Naive thymus-derived CD4-positive, alpha-beta T cell (primary cell): ENCODE measurements at regions of chr16 and their contacts with region 1.

Region 1: DNA sequence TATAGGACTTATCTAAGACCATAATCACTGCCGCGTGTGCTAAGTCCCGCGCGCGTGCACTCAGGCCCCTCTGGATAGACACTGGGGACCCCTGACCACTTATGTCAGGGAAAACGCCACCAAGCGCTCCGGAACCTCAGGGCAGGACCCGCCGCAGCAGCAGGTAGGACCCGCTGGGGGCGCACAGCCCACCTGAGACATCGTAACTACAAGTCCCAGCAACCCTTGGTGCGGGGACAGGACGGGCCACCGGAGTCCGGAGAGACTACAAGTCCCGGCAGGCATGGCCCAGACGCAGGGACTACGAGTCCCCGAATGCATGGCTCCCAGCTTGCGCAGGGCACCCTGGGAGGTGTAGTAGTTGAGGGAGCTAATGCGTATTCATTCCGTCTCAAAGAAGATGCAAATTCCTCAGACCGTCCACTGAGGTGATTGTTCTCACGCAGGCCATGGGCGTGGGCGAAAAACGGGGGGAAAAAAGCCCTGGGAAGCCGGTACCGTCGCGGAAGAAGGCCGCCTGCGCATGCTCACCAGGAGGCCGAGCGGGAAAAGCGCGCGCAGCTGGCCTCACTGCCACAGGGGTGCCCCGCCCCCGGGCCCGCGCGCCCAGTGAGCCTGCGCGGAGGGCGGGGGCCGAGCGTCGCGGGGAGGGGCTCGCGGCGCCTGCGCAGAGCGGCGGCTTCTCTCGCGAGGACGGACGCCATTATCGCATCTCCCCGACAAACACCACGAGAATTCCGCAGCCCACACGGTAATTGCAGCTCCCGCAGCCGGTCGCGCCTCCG is at the start of gene BANP:
- DNase-seq: peak; percentile 96 to 99 (median 99)
- ATAC-seq: peak; percentile 93
- H3K4me3 ChIP-seq: peak within 1 kb of the TSS; percentile 83
- H3K4me3 Mint-ChIP-seq: peak within 1 kb of the TSS; percentile 92 to 100 (median 99)
- H3K27ac ChIP-seq: peak within 1 kb of the TSS; percentile 90
- H3K27ac Mint-ChIP-seq: peak within 1 kb of the TSS; percentile 97 to 100 (median 99)
- H3K4me1 ChIP-seq: peaks cover 15 to 33% of the 10 kb centered on the region in 2 donors
- H3K4me1 Mint-ChIP-seq: peaks cover 27 to 66% (median 43%) of the 10 kb centered on the region in 7 donors
- H3K27me3 ChIP-seq: no peaks in the 10 kb centered on the region
- H3K27me3 Mint-ChIP-seq: peaks cover 0 to 8% (median 2%) of the 10 kb centered on the region in 5 donors
- total RNA-seq, gene BANP: 43.6 to 81.2 (median 68.5) TPM

Region 2: GRCh38 chr16:87387942-87388817 is 562.8 kb before region 1 on chr16:
- CTCF ChIA-PET with region 1: no interaction called
- POLR2A ChIA-PET with region 1: interaction called, 4 read pairs
- intact Hi-C with region 1: loop called (anchors 1 kb)
- DNase-seq: peak; percentile 46 to 95 (median 88)
- ATAC-seq: peak; percentile 75
- H3K4me3 ChIP-seq: peak overlapping the region; percentile 27
- H3K4me3 Mint-ChIP-seq: peak overlapping the region; percentile 27 to 78 (median 68)
- H3K27ac ChIP-seq: peak overlapping the region; percentile 86
- H3K27ac Mint-ChIP-seq: peak overlapping the region; percentile 87 to 99 (median 96)
- H3K4me1 ChIP-seq: peaks cover 17 to 29% of the 10 kb centered on the region in 2 donors
- H3K4me1 Mint-ChIP-seq: peaks cover 15 to 55% (median 44%) of the 10 kb centered on the region in 7 donors
- H3K27me3 ChIP-seq: no peaks in the 10 kb centered on the region
- H3K27me3 Mint-ChIP-seq: peaks cover 0 to 2% (median 0%) of the 10 kb centered on the region in 5 donors

Region 3: GRCh38 chr16:87648236-87648635 is 302.7 kb before region 1 on chr16:
- CTCF ChIA-PET with region 1: no interaction called
- POLR2A ChIA-PET with region 1: no interaction called
- intact Hi-C with region 1: no loop called
- DNase-seq: no peak
- ATAC-seq: no peak
- H3K4me3 ChIP-seq: no peak overlapping the region
- H3K4me3 Mint-ChIP-seq: no peak overlapping the region
- H3K27ac ChIP-seq: no peak overlapping the region
- H3K27ac Mint-ChIP-seq: no peak overlapping the region
- H3K4me1 ChIP-seq: no peaks in the 10 kb centered on the region
- H3K4me1 Mint-ChIP-seq: peaks cover 0 to 3% (median 0%) of the 10 kb centered on the region in 7 donors
- H3K27me3 ChIP-seq: no peaks in the 10 kb centered on the region
- H3K27me3 Mint-ChIP-seq: peaks cover 0 to 15% (median 4%) of the 10 kb centered on the region in 5 donors

Region 4: DNA sequence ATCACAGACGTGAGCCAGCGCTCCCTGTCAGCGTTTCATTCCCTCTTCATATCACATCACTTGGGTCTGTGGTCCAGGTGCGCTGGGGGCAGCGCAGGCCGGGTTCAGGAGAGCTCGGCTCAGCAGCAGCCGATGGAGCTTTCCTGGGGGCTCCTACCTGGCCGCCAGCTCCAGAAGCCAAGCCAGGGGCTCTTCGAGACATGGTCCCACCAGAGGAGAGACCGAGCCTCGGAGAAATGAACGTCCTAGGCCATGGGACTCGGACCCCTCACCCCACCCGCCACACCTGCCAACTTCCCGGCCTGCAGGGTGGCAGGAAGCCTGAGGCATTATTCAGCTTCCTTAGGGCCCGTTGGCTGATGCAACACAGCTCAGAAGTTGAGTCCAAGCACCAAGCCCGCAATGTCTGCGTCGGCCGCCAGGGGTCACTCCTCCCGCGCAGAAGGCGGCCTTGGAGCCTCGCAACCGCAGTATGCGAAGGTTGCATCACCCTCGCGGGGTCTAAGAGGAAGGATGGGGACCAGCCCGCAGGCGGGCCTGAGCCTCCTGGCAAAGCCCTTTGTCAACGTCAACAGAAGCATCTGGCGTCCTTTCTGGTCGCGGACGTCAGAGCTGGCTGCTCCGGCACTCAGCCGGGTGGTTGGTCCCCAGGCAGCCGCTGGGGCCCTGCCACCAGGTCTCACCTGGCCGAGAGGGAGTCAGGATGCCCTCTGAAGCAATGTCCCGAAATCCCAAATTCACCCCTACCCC is 172.0 kb before region 1 on chr16:
- CTCF ChIA-PET with region 1: no interaction called
- POLR2A ChIA-PET with region 1: interaction called, 3 read pairs
- intact Hi-C with region 1: loop called (anchors 1 kb)
- DNase-seq: peak; percentile 83 to 96 (median 88)
- ATAC-seq: peak; percentile 94
- H3K4me3 ChIP-seq: no peak overlapping the region
- H3K4me3 Mint-ChIP-seq: peak overlapping the region in 9 of 10 donors; percentile 54 to 84 (median 63)
- H3K27ac ChIP-seq: no peak overlapping the region
- H3K27ac Mint-ChIP-seq: peak overlapping the region; percentile 51 to 96 (median 89)
- H3K4me1 ChIP-seq: peaks cover 17 to 33% of the 10 kb centered on the region in 2 donors
- H3K4me1 Mint-ChIP-seq: peaks cover 12 to 62% (median 38%) of the 10 kb centered on the region in 7 donors
- H3K27me3 ChIP-seq: no peaks in the 10 kb centered on the region
- H3K27me3 Mint-ChIP-seq: no peaks in the 10 kb centered on the region

Region 5: DNA sequence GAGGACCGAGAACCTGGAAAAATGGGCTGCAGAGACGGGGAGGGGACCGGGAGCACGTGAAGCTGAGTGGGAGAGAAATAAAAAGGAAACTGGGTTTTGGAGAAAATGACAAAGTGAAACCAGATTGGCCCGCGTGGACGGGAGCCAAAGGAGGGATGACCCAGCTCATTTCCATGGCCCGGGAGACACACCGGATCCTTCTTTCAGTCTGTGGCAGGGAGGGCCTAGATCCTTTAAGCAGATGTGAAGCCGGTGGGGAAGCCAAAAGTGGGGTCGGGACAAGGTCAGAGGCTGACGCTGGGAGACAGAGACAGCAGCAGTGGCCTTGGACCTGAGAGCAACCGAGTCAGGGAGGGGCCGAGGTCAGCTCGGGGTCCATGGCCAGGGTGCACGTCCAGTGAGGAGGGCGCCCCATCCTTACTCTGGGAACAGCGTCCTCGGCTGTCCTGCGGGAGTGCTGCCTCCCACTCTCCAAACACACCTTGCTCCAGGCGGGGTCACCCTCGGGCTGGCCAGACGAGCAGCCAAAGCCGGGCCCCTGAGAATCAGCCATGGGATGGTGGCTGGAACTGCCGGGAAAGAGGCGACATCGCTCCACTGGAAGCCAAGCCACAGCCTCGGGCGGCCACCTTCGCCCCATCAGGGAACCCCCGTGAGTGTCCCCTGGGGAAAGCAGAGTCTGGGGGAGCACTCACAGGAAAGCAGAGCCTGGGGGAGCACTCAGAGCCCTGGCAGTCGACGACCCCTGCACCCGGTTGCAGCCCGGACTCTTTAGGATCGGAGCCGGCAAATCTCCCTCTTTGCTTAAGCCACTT is 31.9 kb before region 1 on chr16:
- CTCF ChIA-PET with region 1: no interaction called
- POLR2A ChIA-PET with region 1: no interaction called
- intact Hi-C with region 1: no loop called
- DNase-seq: no peak
- ATAC-seq: no peak
- H3K4me3 ChIP-seq: no peak overlapping the region
- H3K4me3 Mint-ChIP-seq: no peak overlapping the region
- H3K27ac ChIP-seq: no peak overlapping the region
- H3K27ac Mint-ChIP-seq: no peak overlapping the region
- H3K4me1 ChIP-seq: no peaks in the 10 kb centered on the region
- H3K4me1 Mint-ChIP-seq: peaks cover 0 to 6% (median 0%) of the 10 kb centered on the region in 7 donors
- H3K27me3 ChIP-seq: no peaks in the 10 kb centered on the region
- H3K27me3 Mint-ChIP-seq: peaks cover 0 to 5% (median 4%) of the 10 kb centered on the region in 5 donors

Region 6: DNA sequence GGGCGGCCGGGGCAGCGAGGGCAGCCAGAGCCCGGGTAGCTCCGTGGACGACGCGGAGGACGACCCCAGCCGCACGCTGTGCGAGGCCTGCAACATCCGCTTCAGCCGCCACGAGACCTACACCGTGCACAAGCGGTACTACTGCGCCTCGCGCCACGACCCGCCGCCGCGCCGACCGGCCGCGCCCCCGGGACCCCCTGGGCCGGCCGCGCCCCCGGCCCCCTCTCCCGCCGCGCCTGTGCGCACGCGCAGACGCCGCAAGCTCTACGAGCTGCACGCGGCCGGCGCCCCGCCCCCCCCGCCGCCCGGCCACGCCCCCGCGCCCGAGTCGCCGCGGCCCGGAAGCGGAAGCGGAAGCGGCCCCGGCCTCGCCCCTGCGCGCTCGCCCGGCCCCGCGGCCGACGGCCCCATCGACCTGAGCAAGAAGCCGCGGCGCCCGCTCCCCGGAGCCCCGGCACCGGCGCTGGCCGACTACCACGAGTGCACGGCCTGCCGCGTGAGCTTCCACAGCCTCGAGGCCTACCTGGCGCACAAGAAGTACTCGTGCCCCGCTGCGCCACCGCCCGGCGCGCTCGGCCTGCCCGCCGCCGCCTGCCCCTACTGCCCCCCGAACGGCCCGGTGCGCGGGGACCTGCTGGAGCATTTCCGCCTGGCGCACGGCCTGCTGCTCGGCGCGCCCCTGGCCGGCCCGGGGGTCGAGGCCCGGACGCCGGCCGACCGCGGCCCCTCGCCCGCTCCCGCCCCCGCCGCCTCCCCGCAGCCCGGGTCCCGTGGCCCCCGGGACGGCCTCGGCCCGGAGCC is 583.2 kb after region 1 on chr16:
- CTCF ChIA-PET with region 1: no interaction called
- POLR2A ChIA-PET with region 1: no interaction called
- intact Hi-C with region 1: loop called (anchors 10 kb)
- DNase-seq: peak; percentile 45 to 87 (median 77)
- ATAC-seq: peak; percentile 89
- H3K4me3 ChIP-seq: peak overlapping the region; percentile 30
- H3K4me3 Mint-ChIP-seq: peak overlapping the region in 7 of 10 donors; percentile 23 to 87 (median 55)
- H3K27ac ChIP-seq: peak overlapping the region; percentile 80
- H3K27ac Mint-ChIP-seq: peak overlapping the region in 3 of 9 donors; percentile 53 to 79 (median 72)
- H3K4me1 ChIP-seq: peaks cover 0 to 9% of the 10 kb centered on the region in 2 donors
- H3K4me1 Mint-ChIP-seq: peaks cover 9 to 16% (median 13%) of the 10 kb centered on the region in 7 donors
- H3K27me3 ChIP-seq: no peaks in the 10 kb centered on the region
- H3K27me3 Mint-ChIP-seq: peaks cover 0 to 8% (median 0%) of the 10 kb centered on the region in 5 donors

Region 7: GRCh38 chr16:88706288-88706964 is 755.5 kb after region 1 on chr16 and contains the starts of genes CTU2 and RNF166:
- CTCF ChIA-PET with region 1: no interaction called
- POLR2A ChIA-PET with region 1: no interaction called
- intact Hi-C with region 1: loop called (anchors 5 to 10 kb)
- DNase-seq: peak; percentile 86 to 98 (median 92)
- ATAC-seq: peak; percentile 84
- H3K4me3 ChIP-seq: peak within 1 kb of the TSS; percentile 79
- H3K4me3 Mint-ChIP-seq: peak within 1 kb of the TSS; percentile 78 to 98 (median 94)
- H3K27ac ChIP-seq: peak within 1 kb of the TSS; percentile 88
- H3K27ac Mint-ChIP-seq: peak within 1 kb of the TSS; percentile 85 to 98 (median 97)
- H3K4me1 ChIP-seq: peaks cover 25 to 40% of the 10 kb centered on the region in 2 donors
- H3K4me1 Mint-ChIP-seq: peaks cover 31 to 45% (median 41%) of the 10 kb centered on the region in 7 donors
- H3K27me3 ChIP-seq: no peaks in the 10 kb centered on the region
- H3K27me3 Mint-ChIP-seq: no peaks in the 10 kb centered on the region
- total RNA-seq, gene CTU2: 26.0 to 43.3 (median 28.3) TPM
- total RNA-seq, gene RNF166: 99.8 to 324 (median 133) TPM